GM12878 (cell line): ENCODE measurements at regions of chrX and their contacts with region 1.

Region 1: DNA sequence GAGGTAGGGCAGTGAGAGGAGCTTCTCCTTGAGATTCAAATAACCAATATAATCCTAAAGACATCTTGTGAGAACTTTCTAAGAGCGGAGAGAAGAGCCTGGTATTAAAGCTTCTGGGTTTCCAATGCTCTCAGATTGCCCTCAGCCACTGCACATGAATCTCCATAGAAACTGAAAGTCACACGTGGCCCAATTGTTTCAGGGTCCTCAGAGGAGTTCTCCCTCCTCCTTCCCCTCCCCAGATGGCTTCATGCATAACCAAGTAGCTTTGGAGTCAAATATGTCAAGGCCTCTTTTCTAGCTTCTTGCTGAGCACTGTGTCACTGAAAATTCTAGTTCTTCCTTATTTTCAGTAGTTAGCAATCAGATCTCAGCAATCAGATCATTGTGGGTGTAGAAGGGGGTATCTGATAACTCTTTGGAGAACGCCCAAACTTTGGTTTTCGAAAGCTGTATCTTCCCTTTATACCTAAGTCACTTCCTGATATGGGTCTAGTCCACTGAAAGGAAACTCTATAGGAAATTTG is 2.2 kb downstream of the BTK start:
- DNase-seq: peak; percentile 60
- ATAC-seq: peak; percentile 75
- H3K4me3 ChIP-seq: peak overlapping the region; percentile 71
- H3K27ac ChIP-seq: peak overlapping the region; percentile 70
- H3K4me1 ChIP-seq: no peaks in the 10 kb centered on the region
- H3K27me3 ChIP-seq: no peaks in the 10 kb centered on the region
- CTCF ChIP-seq: no peak
- EP300 ChIP-seq: no peak
- POLR2A ChIP-seq: no peak
- RAD21 ChIP-seq: no peak

Region 2: GRCh38 chrX:101348452-101349192 is 35.1 kb before region 1 on chrX and contains the start of gene TIMM8A:
- CTCF ChIA-PET with region 1: interaction called, 3 read pairs
- POLR2A ChIA-PET with region 1: interaction called, 7 read pairs
- RAD21 ChIA-PET with region 1: interaction called, 11 read pairs
- SMC1A ChIA-PET with region 1: interaction called, 6 read pairs
- in situ Hi-C with region 1: no loop called
- intact Hi-C with region 1: loop called (anchors 5 kb)
- DNase-seq: peak; percentile 31
- ATAC-seq: peak; percentile 99
- H3K4me3 ChIP-seq: peak within 1 kb of the TSS; percentile 87
- H3K27ac ChIP-seq: peak within 1 kb of the TSS; percentile 72
- H3K4me1 ChIP-seq: 0 out of 2 replicates have a peak, but pooled peaks cover 3% of the 10 kb centered on the region
- H3K27me3 ChIP-seq: no peaks in the 10 kb centered on the region
- CTCF ChIP-seq: no peak
- EP300 ChIP-seq: no peak
- POLR2A ChIP-seq: peak; percentile 88
- RAD21 ChIP-seq: no peak
- polyA plus RNA-seq, gene TIMM8A: 84.5 to 92.7 TPM